Cardiac septum (tissue), 1 donor: ENCODE measurements at regions of chr2 and their contacts with region 1.

Region 1: GRCh38 chr2:152861349-152861942 is 143.0 kb downstream of the ARL6IP6 start:
- DNase-seq: no peak

Region 2: GRCh38 chr2:153478334-153479261 is 617.2 kb after region 1 on chr2 and contains the start of gene RPRM:
- intact Hi-C with region 1: loop called (anchors 5 kb)
- DNase-seq: no peak
- total RNA-seq, gene RPRM: not detected

Region 3: GRCh38 chr2:153519257-153519875 is 657.9 kb after region 1 on chr2:
- intact Hi-C with region 1: loop called (anchors 10 kb)
- DNase-seq: no peak

Region 4: GRCh38 chr2:154375579-154375931 is 1514.1 kb after region 1 on chr2:
- intact Hi-C with region 1: loop called (anchors 5 kb)
- DNase-seq: no peak